ENCODE measurements at regions of chr5 and their contacts with region 1.

Region 1: GRCh38 chr5:10283927-10284635 is 23.6 kb downstream of the CMBL start:
- DNase-seq: peak; percentile 81 to 89
- H3K4me3 ChIP-seq: no peak overlapping the region
- H3K27ac ChIP-seq: no peak overlapping the region
- H3K4me1 ChIP-seq: peaks cover 0 to 13% (median 0%) of the 10 kb centered on the region in 4 donors
- H3K27me3 ChIP-seq: no peaks in the 10 kb centered on the region
- CTCF ChIP-seq: peak; percentile 87 to 93

Region 2: DNA sequence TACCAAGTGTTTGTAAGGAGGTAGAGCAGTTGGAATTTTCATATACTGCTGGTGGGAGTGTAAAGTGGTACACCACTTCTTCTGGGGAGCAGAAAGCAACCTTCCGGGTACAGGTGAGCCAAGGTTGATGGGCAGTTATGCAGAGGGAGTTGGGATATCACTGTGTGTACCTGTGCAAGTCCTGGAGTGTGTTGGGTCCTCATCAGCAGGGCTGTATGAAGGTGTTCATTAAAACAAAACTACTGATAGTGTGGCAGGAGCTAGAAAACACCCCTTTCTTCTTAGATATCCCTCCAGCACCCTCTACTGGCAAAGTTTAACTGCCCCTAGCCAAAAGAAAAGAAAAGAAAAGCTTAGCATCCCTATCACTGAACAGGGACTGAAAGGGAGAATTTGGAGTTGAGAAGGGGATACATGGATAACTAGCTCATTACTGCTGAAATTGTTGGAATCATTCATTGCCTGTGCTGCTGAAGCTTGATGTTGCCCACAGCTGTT is 80.2 kb after region 1 on chr5:
- intact Hi-C with region 1: loop called (anchors 10 kb)
- DNase-seq: no peak
- H3K4me3 ChIP-seq: no peak overlapping the region
- H3K27ac ChIP-seq: no peak overlapping the region
- H3K4me1 ChIP-seq: peaks cover 0 to 58% (median 27%) of the 10 kb centered on the region in 4 donors
- H3K27me3 ChIP-seq: no peaks in the 10 kb centered on the region
- CTCF ChIP-seq: no peak

Region 3: DNA sequence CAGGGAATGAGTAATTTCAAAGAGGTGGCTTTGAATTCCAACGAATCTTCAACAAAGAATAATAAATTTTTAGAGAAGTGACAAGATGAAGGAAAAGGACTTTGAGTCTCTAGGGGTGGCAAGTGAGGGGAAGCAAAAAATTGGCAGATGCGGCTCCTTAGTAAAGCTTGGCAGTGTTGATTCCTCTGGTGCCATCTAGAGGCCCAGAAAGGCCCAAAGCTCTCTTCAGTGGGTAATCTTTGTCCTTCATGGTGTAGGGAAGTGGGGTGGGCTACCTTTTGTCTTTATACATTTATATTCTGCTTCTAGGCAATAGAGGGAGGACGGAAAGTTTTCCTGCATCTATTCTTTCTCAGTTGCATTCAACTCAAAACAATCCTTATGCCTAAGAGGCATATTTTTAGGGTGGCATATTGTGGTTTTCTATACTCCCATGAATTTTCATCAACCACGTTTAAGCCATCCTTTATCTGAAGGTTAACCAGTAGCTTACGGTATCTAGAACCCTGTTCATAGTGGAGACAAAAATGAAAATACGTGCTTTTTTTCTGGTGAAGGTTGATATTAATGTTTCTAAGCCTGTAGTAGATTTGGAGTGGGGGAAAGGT is 140.1 kb after region 1 on chr5:
- intact Hi-C with region 1: loop called (anchors 10 kb)
- DNase-seq: no peak
- H3K4me3 ChIP-seq: no peak overlapping the region
- H3K27ac ChIP-seq: no peak overlapping the region
- H3K4me1 ChIP-seq: no peaks in the 10 kb centered on the region
- H3K27me3 ChIP-seq: no peaks in the 10 kb centered on the region
- CTCF ChIP-seq: peak; percentile 11 to 31

Measured in tibial artery (tissue), 4 donors.